ENCODE measurements at regions of chr6 and their contacts with region 1.

Region 1: DNA sequence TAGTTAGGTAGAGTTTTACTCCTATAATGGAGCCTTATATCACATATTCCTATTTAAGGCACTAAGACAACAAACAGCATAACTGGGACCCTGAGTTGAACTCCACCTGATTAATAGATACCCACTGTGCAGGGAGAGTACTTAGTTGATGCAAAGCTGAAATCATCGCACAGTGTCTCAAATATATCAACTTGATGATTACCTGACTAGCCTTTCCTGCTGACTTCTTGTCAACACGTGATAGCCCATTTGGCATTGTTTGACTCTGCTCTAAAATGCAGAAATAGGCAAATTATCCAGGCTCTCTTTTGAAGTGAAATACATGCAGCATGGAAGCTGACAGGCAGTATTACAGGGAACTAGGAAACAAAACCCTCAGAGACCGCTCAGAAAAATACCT is 154.6 kb upstream of the HDAC2 start:
- DNase-seq: no peak
- H3K4me3 ChIP-seq: no peak overlapping the region
- H3K27me3 ChIP-seq: 0 out of 2 replicates have a peak, but pooled peaks cover 1% of the 10 kb centered on the region
- CTCF ChIP-seq: no peak

Region 2: DNA sequence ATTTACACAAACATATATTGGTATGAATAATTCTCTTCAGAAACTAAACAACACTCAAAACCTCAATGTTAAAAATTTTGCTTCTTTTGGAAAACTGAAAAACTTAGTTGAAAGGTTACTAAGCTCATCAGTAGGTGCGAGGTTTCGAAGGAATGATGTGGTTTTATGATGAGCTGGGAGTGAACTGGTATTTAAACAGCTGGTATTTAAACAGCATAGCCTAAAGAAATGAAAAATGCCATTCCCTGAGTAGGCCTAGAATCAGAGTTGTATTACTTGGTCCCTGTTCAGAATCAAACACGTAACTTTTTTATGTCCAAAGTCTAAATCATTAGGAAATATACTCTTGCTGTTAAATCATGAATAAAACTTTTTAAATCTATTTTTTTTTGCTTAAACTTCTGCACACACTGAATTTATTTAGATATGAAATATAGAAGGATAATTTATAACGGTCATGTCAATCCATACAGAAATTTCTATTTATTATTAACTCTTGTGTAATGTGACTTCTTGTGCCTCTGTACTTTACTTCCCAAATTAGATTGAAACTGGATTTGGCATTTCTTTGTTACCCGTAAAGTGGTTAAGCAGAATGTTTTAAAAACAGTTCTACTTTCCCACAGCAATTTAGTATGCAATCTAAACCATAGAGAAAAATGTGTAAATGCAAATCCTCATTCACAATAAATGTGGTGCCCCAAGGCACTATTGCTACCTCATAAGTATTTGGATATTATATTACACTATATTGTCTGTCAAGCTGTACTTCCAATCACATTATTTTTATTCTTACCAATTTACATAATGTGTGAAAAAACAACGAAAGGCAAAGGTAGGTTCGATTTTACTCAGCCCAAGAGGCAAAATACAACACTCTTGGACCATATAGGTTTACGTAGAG is 93.1 kb after region 1 on chr6:
- CTCF ChIA-PET with region 1: no interaction called
- POLR2A ChIA-PET with region 1: interaction called, 17 read pairs
- DNase-seq: no peak
- H3K4me3 ChIP-seq: no peak overlapping the region
- H3K27me3 ChIP-seq: no peaks in the 10 kb centered on the region
- CTCF ChIP-seq: no peak